PC-9 (cell line): ENCODE measurements at regions of chr20 and their contacts with region 1.

Region 1: DNA sequence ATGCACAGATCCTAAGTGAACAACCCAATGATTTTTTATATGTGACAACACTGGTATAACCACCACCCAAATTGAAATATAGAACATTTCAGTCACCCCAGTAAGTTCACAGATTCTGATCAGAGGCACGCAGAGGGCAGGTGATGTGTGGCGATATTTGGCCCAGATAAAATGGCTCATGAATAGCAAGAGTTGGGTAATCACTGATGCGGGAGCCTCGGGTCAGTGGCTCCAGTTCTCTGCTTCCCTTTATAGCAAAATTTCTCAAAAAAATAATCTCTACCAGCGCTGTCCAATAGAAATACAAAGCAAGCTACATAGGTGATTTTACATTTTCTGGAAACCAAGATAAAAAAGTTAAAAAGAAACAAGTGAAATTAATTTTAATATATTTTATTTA is 14.9 kb downstream of the GHRH start:
- DNase-seq: no peak
- H3K4me3 ChIP-seq: no peak overlapping the region
- H3K27ac ChIP-seq: no peak overlapping the region
- H3K4me1 ChIP-seq: no peaks in the 10 kb centered on the region
- H3K27me3 ChIP-seq: no peaks in the 10 kb centered on the region
- CTCF ChIP-seq: no peak

Region 2: DNA sequence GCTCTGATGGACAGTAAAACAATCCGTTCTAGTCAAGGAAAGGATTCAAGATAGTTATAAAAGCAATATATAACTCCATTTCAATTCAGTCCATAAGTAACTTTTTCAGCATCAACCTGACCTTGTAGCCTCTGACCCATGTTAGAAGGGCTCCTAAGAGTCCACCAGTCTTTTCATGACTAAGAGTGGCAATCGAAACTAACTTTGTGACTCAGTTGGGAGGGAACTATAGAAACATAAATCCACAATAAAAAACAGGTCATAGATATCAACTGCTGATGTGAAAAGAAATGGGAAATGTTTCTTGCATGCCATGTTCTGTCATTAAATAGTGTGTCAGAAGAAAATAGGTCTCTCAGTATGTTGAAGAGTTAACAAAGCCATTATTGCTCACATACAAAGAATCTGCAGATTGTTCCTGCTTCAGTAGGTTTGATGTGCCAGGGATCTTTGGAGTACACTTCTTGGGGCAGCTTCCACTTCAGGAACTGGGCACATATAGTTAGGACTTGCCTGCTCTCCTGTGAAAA is 134.7 kb before region 1 on chr20:
- CTCF ChIA-PET with region 1: no interaction called
- POLR2A ChIA-PET with region 1: no interaction called
- intact Hi-C with region 1: no loop called
- DNase-seq: no peak
- H3K4me3 ChIP-seq: no peak overlapping the region
- H3K27ac ChIP-seq: no peak overlapping the region
- H3K4me1 ChIP-seq: no peaks in the 10 kb centered on the region
- H3K27me3 ChIP-seq: no peaks in the 10 kb centered on the region
- CTCF ChIP-seq: no peak

Region 3: GRCh38 chr20:37276494-37277252 is 29.9 kb after region 1 on chr20:
- CTCF ChIA-PET with region 1: no interaction called
- POLR2A ChIA-PET with region 1: no interaction called
- intact Hi-C with region 1: no loop called
- DNase-seq: peak in 1 of 2 experiments; percentile 33
- H3K4me3 ChIP-seq: no peak overlapping the region
- H3K27ac ChIP-seq: no peak overlapping the region
- H3K4me1 ChIP-seq: no peaks in the 10 kb centered on the region
- H3K27me3 ChIP-seq: no peaks in the 10 kb centered on the region
- CTCF ChIP-seq: no peak

Region 4: GRCh38 chr20:37822141-37822601 is 575.4 kb after region 1 on chr20:
- CTCF ChIA-PET with region 1: no interaction called
- POLR2A ChIA-PET with region 1: interaction called, 26 read pairs
- intact Hi-C with region 1: no loop called
- DNase-seq: no peak
- H3K4me3 ChIP-seq: no peak overlapping the region
- H3K27ac ChIP-seq: no peak overlapping the region
- H3K4me1 ChIP-seq: no peaks in the 10 kb centered on the region
- H3K27me3 ChIP-seq: no peaks in the 10 kb centered on the region
- CTCF ChIP-seq: no peak